Activated naive CD8-positive, alpha-beta T cell treated with anti-CD3 and anti-CD28 coated beads, Interleukin-2, amount 10 ng/mL, durations not matched to agents 7 days and 5 days (primary cell): ENCODE measurements at regions of chr12 and their contacts with region 1.

Region 1: DNA sequence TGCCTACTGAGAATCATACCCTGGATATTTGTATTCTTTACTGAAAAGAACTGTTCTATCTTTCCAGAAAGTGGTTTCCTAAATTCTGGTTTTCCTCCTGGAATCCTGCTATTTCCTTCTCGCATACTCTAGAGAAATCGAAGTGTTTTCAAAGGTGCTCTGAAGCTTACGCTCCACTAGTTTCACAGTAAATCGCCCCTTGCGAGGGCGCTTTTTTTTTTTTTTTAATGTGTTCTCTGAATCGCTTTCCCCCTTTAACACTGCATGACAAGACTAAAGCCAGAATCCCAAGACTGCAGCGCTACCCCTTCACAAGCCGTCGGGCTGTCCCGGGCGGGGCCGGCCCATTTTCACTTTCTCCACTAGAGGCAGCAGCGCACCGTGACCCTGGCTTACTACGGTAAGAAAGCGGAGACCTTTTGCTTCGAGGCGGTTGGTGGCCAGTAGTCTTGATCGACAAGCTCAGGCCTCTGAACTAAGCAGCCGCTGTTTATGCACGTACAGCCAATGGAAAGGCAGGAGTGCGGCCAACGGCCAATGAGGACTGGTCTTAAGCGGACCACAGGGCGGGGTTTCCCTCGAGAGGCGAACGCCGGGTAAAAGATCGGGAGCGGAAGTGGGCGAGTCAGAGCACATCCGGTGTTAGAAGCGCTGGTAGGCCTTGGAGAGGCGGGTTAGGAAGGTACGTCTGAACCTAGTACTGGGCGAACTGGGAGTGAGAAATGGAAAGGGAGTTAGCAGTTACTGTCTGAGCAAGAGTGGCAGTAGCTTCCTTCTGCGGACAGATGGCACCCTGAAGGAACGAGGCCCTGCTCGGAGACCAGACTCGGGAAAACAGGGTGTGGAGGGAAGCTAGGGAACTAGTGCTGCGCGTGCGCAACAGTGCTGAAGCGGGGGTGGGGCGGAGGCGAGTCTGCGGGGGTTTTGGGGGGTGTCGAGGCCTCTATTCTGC is at the start of gene TMBIM6:
- DNase-seq: peak; percentile 96
- ATAC-seq: peak; percentile 93
- H3K4me3 Mint-ChIP-seq: peak within 1 kb of the TSS; percentile 88
- H3K27ac Mint-ChIP-seq: peak within 1 kb of the TSS; percentile 96
- H3K4me1 Mint-ChIP-seq: peaks cover 28% of the 10 kb centered on the region
- H3K27me3 Mint-ChIP-seq: no peaks in the 10 kb centered on the region
- total RNA-seq, gene TMBIM6: 426 to 431 TPM

Region 2: DNA sequence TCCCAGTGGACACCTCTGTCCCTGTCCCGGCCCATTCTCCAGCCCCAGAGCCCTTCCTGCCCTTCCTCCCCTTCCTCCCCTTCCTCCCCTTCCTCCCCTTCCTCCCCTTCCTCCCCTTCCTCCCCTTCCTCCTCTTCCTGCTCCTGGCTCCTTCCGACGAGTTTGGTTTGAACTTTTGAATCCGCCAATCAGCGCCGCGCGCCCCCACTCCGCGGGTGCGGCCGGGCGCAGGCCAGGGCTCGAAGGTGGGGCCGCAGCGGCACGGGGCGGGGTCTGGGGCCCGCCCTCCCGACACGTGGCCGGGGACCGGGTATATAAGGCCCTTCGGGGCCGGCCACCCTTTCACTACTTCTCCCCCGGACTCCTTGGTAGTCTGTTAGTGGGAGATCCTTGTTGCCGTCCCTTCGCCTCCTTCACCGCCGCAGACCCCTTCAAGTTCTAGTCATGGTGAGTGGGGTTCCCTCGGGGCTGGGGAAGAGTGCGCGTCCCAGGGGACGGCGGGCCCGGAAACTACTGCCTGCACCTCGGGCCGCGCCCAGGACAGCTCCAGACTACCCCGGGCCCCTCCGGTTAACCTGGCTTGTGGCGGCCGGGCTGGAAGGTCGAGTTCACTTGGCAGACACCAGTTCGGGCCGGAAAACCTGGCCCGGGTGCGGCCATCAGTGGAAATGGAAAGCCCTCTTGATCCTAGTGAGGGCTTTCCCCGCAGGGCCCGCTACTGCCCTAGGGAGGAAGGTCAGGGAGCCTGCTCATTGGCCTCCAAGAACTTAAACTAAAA is 476.3 kb before region 1 on chr12 and contains the start of gene TUBA1C:
- POLR2A ChIA-PET with region 1: interaction called, 10 read pairs
- DNase-seq: peak; percentile 97
- ATAC-seq: peak; percentile 85
- H3K4me3 Mint-ChIP-seq: peak within 1 kb of the TSS; percentile 99
- H3K27ac Mint-ChIP-seq: peak within 1 kb of the TSS; percentile 98
- H3K4me1 Mint-ChIP-seq: peaks cover 30% of the 10 kb centered on the region
- H3K27me3 Mint-ChIP-seq: no peaks in the 10 kb centered on the region
- total RNA-seq, gene TUBA1C: 162 to 168 TPM

Region 3: DNA sequence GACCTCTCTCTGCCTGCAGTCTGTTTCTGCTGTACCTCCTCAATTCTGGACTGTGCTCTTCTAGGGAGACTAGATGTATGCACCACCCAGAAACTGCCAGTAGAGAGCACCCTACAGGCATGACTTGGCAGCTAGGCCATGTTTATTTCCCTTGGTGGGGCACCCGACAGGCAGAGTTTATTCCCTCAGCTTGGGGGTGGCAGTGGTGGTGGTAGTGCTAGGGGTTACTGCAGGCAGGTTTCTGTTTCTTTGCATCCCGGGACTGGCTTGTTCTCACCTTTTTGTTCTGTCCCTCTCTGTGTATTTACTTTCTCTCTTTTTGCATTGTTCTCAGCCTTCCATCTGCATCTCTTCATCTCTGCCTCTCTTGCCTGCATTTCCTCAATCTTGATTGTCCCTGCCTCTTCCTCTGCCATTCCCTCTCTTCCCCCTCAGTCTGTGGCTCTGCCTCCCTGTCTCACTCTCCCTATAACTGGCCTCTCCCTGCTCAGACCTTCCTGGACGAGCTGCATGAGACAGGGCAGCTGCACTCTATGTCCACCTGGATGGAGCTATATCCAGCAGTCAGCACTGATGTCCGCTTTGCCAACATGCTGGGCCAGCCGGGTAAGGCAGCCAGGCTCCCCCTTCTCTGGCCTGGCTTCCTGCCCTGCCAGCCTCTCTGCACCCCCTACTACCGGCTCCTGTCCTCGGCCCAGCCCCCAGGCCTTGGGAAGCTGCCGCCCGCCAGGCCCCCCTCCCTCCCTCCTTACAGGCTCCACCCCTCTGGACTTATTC is 104.0 kb before region 1 on chr12:
- POLR2A ChIA-PET with region 1: interaction called, 10 read pairs
- DNase-seq: no peak
- ATAC-seq: peak; percentile 90
- H3K4me3 Mint-ChIP-seq: no peak overlapping the region
- H3K27ac Mint-ChIP-seq: peak overlapping the region; percentile 42
- H3K4me1 Mint-ChIP-seq: peaks cover 19% of the 10 kb centered on the region
- H3K27me3 Mint-ChIP-seq: no peaks in the 10 kb centered on the region

Region 4: DNA sequence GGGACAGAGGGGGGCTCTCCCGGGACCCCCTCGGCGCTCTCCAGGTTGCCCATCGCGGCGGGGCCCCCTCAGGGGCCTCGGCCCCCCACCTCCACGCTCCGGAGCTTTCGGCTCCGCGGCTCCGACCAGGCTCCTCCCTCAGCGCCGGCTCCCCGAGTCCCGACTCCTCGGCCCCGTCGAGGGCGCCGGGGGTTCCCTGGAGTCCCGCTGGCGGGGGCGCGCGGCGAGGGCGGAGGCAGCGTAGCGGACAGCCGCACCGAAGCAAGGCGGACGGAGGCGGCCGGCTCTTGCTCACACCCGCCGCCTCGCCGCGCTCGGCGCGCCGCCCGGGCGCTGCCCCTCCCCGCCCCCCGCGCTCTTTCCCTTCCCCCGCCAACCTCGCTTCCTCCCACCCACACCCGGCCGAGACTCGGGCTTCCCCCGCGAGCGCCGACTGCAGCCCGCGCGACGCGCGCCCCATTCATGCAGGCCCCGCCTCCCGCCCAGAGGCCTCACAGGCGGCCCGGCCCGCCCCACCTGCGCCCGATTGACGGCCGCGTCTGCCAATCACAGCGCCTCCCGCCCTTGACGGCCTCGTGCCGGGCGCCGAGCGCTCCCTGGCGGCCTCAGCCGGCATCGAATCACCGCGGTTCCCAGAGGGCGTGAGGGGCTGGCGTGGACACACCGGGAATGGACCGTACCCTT is 33.9 kb before region 1 on chr12 and contains the start of gene FMNL3:
- POLR2A ChIA-PET with region 1: interaction called, 11 read pairs
- DNase-seq: peak; percentile 100
- ATAC-seq: peak; percentile 97
- H3K4me3 Mint-ChIP-seq: peak within 1 kb of the TSS; percentile 97
- H3K27ac Mint-ChIP-seq: peak within 1 kb of the TSS; percentile 91
- H3K4me1 Mint-ChIP-seq: peaks cover 39% of the 10 kb centered on the region
- H3K27me3 Mint-ChIP-seq: peaks cover 20% of the 10 kb centered on the region
- total RNA-seq, gene FMNL3: 43.5 to 43.8 TPM

Region 5: DNA sequence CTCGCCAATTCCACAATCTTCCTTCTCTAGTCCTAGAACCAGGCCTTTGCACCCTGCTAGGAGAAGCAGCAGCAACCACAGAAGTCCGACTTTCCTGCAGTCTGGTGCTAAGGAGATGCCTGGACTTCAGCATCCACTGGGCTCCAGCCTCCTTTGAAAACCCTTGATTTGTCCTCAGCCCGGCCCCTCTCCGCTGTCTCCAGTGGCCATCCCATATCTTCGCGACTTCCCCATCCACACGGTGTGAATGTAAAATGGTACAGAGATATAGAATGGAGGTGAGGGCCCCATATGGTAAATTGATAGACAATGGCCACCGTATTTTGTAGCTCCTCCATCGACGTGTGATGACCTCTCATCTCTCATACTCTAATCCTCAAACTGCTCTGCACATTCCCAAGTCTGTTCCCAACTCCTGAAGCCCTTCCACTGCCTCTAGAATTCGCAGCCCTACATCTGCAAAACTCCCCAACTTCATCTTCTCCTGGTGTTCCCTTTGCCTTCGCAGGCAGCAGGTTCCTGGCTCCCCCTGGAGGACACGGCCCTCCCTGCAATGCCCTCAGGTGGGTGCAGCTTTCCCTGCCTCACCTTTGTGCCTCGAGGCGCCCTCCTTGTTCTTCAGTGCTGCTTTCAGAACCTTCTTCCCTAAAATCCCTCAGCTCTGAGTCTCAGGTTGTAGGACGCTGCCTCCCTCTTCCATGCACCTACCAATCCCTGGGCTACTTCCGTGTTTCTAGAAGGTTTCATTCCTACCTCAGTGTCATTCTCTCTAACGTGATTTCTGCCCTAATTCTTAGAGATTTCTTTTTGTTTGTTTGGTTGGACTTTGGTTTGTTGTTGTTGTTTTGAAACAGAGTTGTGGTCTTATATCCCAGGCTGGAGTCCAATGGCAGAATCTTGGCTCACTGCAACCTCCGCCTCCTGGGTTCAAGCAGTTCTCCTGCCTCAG is 36.9 kb after region 1 on chr12:
- POLR2A ChIA-PET with region 1: interaction called, 13 read pairs
- DNase-seq: peak; percentile 77
- ATAC-seq: peak; percentile 61
- H3K4me3 Mint-ChIP-seq: no peak overlapping the region
- H3K27ac Mint-ChIP-seq: peak overlapping the region; percentile 31
- H3K4me1 Mint-ChIP-seq: peaks cover 13% of the 10 kb centered on the region
- H3K27me3 Mint-ChIP-seq: peaks cover 17% of the 10 kb centered on the region

Region 6: DNA sequence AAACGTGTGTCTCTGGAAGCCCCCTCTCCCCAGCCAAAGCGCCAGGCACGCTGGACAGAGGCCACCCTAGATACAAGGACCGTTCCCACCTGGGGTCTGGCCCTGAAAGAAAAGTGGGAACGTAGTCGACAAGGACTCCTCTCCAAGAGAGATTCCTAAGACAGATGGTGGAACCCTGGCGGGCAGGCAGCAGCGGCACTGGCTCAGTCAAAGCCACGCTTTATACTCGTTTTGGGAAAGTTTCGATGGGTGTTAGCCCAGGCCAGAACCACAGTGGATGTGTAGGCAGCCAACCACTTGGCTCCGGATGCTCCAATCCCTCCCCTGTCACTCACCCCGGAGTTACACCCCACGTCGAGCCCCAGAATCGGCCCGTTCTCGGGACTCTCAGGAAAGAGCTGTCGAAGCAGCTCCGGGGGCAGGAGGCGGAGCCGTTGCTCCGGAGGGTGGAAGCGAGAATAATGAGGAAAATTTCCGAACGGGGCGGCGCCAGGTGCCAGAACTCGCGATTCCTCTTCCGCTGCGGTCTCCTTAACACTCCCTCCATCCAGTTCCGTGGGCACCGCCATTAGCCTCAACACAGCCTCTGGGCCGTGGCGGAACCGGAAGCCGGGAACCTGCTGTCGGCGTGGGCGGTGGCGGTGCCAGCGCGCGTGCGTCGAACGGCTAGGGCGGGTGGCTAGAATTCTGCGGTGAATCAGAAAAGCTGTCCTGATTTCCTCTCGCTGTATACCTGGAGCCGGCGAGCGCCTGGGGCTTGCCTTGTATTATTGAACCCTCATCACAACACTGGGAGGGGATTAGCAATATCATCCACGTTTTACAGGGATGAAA is 101.5 kb after region 1 on chr12 and contains the start of gene BCDIN3D:
- POLR2A ChIA-PET with region 1: interaction called, 20 read pairs
- DNase-seq: peak; percentile 89
- ATAC-seq: peak; percentile 94
- H3K4me3 Mint-ChIP-seq: peak within 1 kb of the TSS; percentile 92
- H3K27ac Mint-ChIP-seq: peak within 1 kb of the TSS; percentile 96
- H3K4me1 Mint-ChIP-seq: peaks cover 32% of the 10 kb centered on the region
- H3K27me3 Mint-ChIP-seq: peaks cover 2% of the 10 kb centered on the region
- total RNA-seq, gene BCDIN3D: 9.3 to 11.4 TPM